Naive thymus-derived CD4-positive, alpha-beta T cell (primary cell): ENCODE measurements at regions of chr22 and their contacts with region 1.

Region 1: GRCh38 chr22:26672590-26673468 is 15.4 kb downstream of the MIAT start:
- DNase-seq: peak; percentile 74 to 95 (median 92)
- ATAC-seq: peak; percentile 86
- H3K4me3 ChIP-seq: peak overlapping the region; percentile 90
- H3K4me3 Mint-ChIP-seq: peak overlapping the region; percentile 88 to 98 (median 97)
- H3K27ac ChIP-seq: peak overlapping the region; percentile 93
- H3K27ac Mint-ChIP-seq: peak overlapping the region; percentile 95 to 100 (median 99)
- H3K4me1 ChIP-seq: peaks cover 64 to 71% of the 10 kb centered on the region in 2 donors
- H3K4me1 Mint-ChIP-seq: peaks cover 63 to 90% (median 83%) of the 10 kb centered on the region in 7 donors
- H3K27me3 ChIP-seq: no peaks in the 10 kb centered on the region
- H3K27me3 Mint-ChIP-seq: peaks cover 0 to 5% (median 0%) of the 10 kb centered on the region in 5 donors

Region 2: GRCh38 chr22:26364066-26365015 is 308.5 kb before region 1 on chr22:
- CTCF ChIA-PET with region 1: no interaction called
- POLR2A ChIA-PET with region 1: no interaction called
- intact Hi-C with region 1: loop called in 1 of 2 experiments (anchors 5 kb)
- DNase-seq: peak in 8 of 9 donors; percentile 33 to 56 (median 47)
- ATAC-seq: peak; percentile 84
- H3K4me3 ChIP-seq: no peak overlapping the region
- H3K4me3 Mint-ChIP-seq: no peak overlapping the region
- H3K27ac ChIP-seq: no peak overlapping the region
- H3K27ac Mint-ChIP-seq: no peak overlapping the region
- H3K4me1 ChIP-seq: no peaks in the 10 kb centered on the region
- H3K4me1 Mint-ChIP-seq: peaks cover 4 to 13% (median 6%) of the 10 kb centered on the region in 7 donors
- H3K27me3 ChIP-seq: peaks cover 0 to 3% of the 10 kb centered on the region in 2 donors
- H3K27me3 Mint-ChIP-seq: peaks cover 7 to 18% (median 12%) of the 10 kb centered on the region in 5 donors

Region 3: DNA sequence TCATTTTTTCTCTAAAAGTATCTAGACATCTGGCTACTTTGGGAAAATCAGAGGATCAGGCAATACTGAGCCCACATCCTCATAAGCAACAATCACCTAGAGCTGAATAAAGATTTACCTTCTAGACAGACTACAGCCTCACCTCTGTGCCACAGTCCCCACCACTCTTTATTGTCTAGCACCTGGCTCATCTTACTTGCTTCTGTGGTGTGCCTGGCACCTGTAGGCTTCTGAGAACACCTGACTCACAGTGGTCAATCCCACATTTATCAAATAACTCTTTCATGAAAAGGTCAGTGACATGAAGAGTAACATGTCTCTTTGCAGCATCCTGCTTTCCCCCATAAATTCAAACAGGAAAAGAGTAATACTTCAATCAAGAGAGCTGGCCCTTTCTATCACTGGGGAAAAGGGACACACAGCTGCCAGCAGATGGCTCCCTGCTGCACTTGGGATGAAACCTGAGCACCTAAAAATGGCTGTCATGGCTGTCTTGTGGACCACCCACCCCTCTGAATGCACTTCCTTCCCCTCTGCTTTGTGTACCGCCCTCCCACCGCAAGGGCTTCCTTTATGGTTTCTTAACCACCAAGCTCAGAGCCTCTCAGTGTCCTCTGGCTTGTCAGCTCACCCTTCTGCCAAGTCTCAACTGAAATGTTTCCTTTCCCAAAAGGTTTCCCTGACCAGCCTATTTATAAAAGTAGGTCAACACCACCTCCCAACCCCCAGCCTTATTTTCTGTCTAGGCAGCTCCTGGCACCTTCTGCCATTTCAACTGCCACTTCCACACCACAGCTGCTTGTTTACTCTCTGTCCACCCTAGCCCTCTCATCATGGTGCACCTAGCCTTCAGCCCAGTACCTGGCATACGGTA is 169.9 kb before region 1 on chr22:
- CTCF ChIA-PET with region 1: no interaction called
- POLR2A ChIA-PET with region 1: interaction called, 4 read pairs
- intact Hi-C with region 1: loop called in 1 of 2 experiments (anchors 2 kb)
- DNase-seq: peak; percentile 15 to 60 (median 45)
- ATAC-seq: peak; percentile 95
- H3K4me3 ChIP-seq: no peak overlapping the region
- H3K4me3 Mint-ChIP-seq: peak overlapping the region; percentile 28 to 76 (median 58)
- H3K27ac ChIP-seq: peak overlapping the region; percentile 32
- H3K27ac Mint-ChIP-seq: peak overlapping the region; percentile 28 to 87 (median 65)
- H3K4me1 ChIP-seq: peaks cover 13 to 20% of the 10 kb centered on the region in 2 donors
- H3K4me1 Mint-ChIP-seq: peaks cover 16 to 30% (median 25%) of the 10 kb centered on the region in 7 donors
- H3K27me3 ChIP-seq: no peaks in the 10 kb centered on the region
- H3K27me3 Mint-ChIP-seq: no peaks in the 10 kb centered on the region

Region 4: DNA sequence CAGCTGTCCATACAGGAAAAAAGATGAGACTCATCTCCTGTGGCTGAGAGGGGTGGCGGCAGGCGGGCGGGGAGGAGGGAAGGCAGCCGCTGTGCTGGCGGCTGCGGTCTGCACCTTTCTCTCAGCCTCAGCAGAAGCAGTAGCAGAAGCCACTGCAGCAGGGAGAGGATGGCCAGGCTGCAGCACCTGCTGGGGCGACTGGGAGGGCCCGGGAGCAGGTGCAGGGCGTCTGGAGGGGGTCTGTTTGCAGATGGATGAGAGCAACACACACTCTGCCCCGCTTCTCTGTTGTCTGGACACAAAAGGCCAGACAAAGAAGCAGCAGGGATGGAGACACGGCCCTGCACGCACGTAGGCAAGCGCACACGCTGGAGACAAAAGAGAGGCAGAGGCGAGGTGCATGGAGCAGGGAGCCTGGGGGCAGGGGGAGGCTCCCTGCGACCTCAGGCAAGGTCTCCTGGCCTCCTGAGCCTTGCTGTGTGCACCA is 24.8 kb before region 1 on chr22:
- CTCF ChIA-PET with region 1: interaction called, 3 read pairs
- POLR2A ChIA-PET with region 1: no interaction called
- intact Hi-C with region 1: loop called in 1 of 2 experiments (anchors 2 kb)
- DNase-seq: peak in 7 of 9 donors; percentile 24 to 50 (median 31)
- ATAC-seq: peak; percentile 70
- H3K4me3 ChIP-seq: no peak overlapping the region
- H3K4me3 Mint-ChIP-seq: peak overlapping the region; percentile 2 to 85 (median 41)
- H3K27ac ChIP-seq: no peak overlapping the region
- H3K27ac Mint-ChIP-seq: peak overlapping the region in 5 of 9 donors; percentile 5 to 67 (median 48)
- H3K4me1 ChIP-seq: peaks cover 34 to 49% of the 10 kb centered on the region in 2 donors
- H3K4me1 Mint-ChIP-seq: peaks cover 38 to 82% (median 48%) of the 10 kb centered on the region in 7 donors
- H3K27me3 ChIP-seq: no peaks in the 10 kb centered on the region
- H3K27me3 Mint-ChIP-seq: peaks cover 0 to 3% (median 0%) of the 10 kb centered on the region in 5 donors

Region 5: DNA sequence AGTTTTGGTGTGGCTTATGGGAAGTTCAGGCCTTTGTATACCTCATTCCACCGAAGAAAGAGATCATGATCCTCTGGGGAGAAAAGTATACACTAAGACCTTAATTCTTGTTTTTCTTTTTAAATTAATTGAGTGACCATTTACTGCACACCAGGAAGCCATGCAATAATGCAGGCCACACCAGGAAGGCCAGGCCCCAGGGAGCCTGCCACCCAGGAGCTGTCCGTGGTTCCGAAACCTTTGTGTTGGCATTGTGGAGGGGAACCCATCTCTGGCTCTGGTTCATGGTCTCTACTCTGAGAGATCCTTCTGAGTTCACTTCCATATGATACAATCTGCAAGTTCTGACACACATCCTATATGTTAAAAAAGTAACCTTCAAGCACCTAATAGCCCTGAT is 276.4 kb after region 1 on chr22:
- CTCF ChIA-PET with region 1: no interaction called
- POLR2A ChIA-PET with region 1: no interaction called
- intact Hi-C with region 1: no loop called
- DNase-seq: peak in 1 of 9 donors; percentile 14
- ATAC-seq: no peak
- H3K4me3 ChIP-seq: no peak overlapping the region
- H3K4me3 Mint-ChIP-seq: no peak overlapping the region
- H3K27ac ChIP-seq: no peak overlapping the region
- H3K27ac Mint-ChIP-seq: no peak overlapping the region
- H3K4me1 ChIP-seq: no peaks in the 10 kb centered on the region
- H3K4me1 Mint-ChIP-seq: peaks cover 0 to 11% (median 0%) of the 10 kb centered on the region in 7 donors
- H3K27me3 ChIP-seq: no peaks in the 10 kb centered on the region
- H3K27me3 Mint-ChIP-seq: peaks cover 23 to 37% (median 35%) of the 10 kb centered on the region in 5 donors

Region 6: DNA sequence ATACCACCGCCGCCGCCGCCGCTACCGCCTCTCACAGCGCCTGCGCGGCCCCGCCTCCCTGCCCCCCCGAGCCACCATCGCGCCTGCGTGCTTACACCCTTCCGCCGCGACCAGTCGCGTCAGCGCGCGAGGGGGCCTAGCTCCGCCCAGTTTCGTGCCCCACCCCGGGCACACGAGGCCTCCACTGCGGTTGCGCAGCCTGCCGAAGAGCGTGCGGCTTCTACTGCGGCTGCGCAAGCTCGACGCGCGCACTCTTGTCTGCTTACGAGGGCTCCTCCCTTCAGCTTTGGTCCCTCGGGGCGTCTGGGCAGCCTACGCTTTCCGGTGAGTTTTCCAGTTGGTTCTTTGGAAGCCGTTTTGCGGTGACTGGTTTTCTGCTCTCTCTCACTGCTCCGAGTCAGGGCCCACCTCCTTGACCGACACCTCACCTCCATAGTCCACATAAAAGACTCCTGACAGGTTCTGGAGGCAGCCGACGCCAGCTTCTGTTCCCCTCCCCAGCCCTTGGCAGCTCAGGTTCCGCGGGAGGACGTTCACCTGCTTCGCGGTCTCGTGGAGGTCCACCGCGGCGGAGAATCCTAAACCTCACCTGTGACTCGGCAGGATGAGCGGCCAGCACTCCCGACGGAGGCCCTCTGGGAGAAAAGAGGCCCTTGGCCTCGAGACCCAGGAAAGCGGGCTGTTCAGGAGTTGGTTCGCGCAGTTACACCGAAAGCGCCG is 1246.6 kb after region 1 on chr22 and contains the start of gene PITPNB:
- CTCF ChIA-PET with region 1: no interaction called
- POLR2A ChIA-PET with region 1: interaction called, 5 read pairs
- intact Hi-C with region 1: loop called in 1 of 2 experiments (anchors 1 kb)
- DNase-seq: peak; percentile 97 to 100 (median 99)
- ATAC-seq: peak; percentile 95
- H3K4me3 ChIP-seq: peak within 1 kb of the TSS; percentile 84
- H3K4me3 Mint-ChIP-seq: peak within 1 kb of the TSS; percentile 97 to 100 (median 99)
- H3K27ac ChIP-seq: peak within 1 kb of the TSS; percentile 94
- H3K27ac Mint-ChIP-seq: peak within 1 kb of the TSS; percentile 93 to 99 (median 99)
- H3K4me1 ChIP-seq: peaks cover 29 to 32% of the 10 kb centered on the region in 2 donors
- H3K4me1 Mint-ChIP-seq: peaks cover 56 to 85% (median 75%) of the 10 kb centered on the region in 7 donors
- H3K27me3 ChIP-seq: no peaks in the 10 kb centered on the region
- H3K27me3 Mint-ChIP-seq: peaks cover 0 to 4% (median 0%) of the 10 kb centered on the region in 5 donors
- total RNA-seq, gene PITPNB: 56.3 to 98.8 (median 62.8) TPM